Right ventricle myocardium inferior (tissue), 1 donor: ENCODE measurements at regions of chr7 and their contacts with region 1.

Region 1: GRCh38 chr7:95723592-95724180 is 48.7 kb upstream of the DYNC1I1 start:
- DNase-seq: no peak
- ATAC-seq: peak; percentile 78

Region 2: GRCh38 chr7:95871078-95871782 is 147.5 kb after region 1 on chr7:
- intact Hi-C with region 1: loop called (anchors 1 kb)
- DNase-seq: no peak
- ATAC-seq: no peak